BJ (cell line): ENCODE measurements at regions of chr14 and their contacts with region 1.

Region 1: GRCh38 chr14:77023001-77023996 is 5.2 kb downstream of the IRF2BPL start:
- DNase-seq: no peak
- H3K4me3 ChIP-seq: peak overlapping the region; percentile 73
- H3K27me3 ChIP-seq: no peaks in the 10 kb centered on the region
- CTCF ChIP-seq: peak; percentile 43

Region 2: GRCh38 chr14:76947078-76947837 is 76.0 kb before region 1 on chr14:
- CTCF ChIA-PET with region 1: interaction called, 10 read pairs
- POLR2A ChIA-PET with region 1: no interaction called
- DNase-seq: no peak
- H3K4me3 ChIP-seq: no peak overlapping the region
- H3K27me3 ChIP-seq: no peaks in the 10 kb centered on the region
- CTCF ChIP-seq: peak; percentile 65

Region 3: DNA sequence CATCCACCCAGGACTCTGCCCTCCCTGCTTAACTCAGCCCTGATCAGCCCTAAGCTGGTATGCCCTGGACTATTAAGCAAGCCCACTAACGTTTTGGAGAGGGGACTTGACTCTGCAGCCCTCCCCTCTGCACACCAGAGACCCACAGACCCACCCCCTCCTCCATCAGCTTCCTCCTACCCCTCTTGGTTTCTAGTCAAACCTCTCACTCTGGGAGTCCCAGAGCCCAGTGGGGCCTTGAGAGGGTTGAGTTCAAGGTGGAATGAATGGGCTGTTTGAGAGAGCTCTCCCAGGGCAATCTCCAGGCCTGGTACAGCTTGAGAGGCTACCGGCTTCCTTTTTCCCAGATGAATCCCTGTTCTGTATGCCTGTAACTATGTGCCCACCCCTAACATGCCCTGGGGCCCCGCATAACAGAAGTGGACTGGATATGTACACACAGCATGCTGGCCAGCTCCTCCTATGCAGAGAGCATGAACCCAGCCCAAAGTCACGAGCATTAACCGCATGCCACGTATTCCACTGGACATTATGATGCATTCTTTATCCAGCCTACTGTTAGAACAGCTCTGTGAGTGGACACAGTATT is 38.4 kb before region 1 on chr14:
- CTCF ChIA-PET with region 1: interaction called, 3 read pairs
- POLR2A ChIA-PET with region 1: interaction called, 13 read pairs
- DNase-seq: no peak
- H3K4me3 ChIP-seq: no peak overlapping the region
- H3K27me3 ChIP-seq: no peaks in the 10 kb centered on the region
- CTCF ChIP-seq: no peak

Region 4: GRCh38 chr14:77151918-77152588 is 128.8 kb after region 1 on chr14:
- CTCF ChIA-PET with region 1: no interaction called
- POLR2A ChIA-PET with region 1: no interaction called
- DNase-seq: no peak
- H3K4me3 ChIP-seq: no peak overlapping the region
- H3K27me3 ChIP-seq: peaks cover 15% of the 10 kb centered on the region
- CTCF ChIP-seq: peak; percentile 11; the same call in 1 of the 2 replicates